K562 (cell line): ENCODE measurements at regions of chr16 and their contacts with region 1.

Region 1: DNA sequence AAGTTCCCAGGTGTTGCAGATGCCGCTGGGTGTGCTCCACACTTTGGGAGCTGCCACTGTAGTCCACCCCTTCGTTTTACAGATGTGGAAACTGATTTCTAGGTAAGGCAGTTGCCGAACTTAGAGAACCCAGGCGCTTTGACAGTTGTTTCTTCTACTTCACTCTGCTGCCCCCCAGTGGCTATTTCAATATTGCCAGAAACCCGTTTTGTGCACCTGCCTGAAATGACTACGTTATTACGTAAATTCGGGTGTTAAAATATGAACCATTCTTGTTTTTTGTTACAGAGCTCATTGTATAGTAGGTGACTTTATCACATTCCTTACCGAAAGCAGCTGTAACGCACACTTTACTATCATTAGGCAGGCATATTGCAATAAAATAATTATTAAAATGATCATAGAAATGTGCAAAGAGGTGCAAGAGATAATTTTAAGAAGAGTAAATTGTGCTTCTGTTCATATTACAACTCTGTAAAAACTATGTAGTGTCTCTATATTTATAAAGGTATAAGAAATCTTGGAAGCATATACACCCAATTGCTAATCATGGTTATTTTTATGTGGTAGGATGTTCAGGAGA is 44.9 kb downstream of the OTOA start:
- DNase-seq: peak; percentile 68 to 75 (median 72)
- ATAC-seq: peak; percentile 81
- H3K4me3 ChIP-seq: no peak overlapping the region
- H3K27ac ChIP-seq: no peak overlapping the region
- H3K4me1 ChIP-seq: no peaks in the 10 kb centered on the region; a peak in 1 of 5 replicates
- H3K27me3 ChIP-seq: peaks cover 3 to 17% of the 10 kb centered on the region in 2 experiments; a peak in 3 of 5 replicates
- CTCF ChIP-seq: peak; percentile 79 to 92 (median 82)
- EP300 ChIP-seq: no peak
- POLR2A ChIP-seq: no peak
- RAD21 ChIP-seq: peak; percentile 68 to 88

Region 2: DNA sequence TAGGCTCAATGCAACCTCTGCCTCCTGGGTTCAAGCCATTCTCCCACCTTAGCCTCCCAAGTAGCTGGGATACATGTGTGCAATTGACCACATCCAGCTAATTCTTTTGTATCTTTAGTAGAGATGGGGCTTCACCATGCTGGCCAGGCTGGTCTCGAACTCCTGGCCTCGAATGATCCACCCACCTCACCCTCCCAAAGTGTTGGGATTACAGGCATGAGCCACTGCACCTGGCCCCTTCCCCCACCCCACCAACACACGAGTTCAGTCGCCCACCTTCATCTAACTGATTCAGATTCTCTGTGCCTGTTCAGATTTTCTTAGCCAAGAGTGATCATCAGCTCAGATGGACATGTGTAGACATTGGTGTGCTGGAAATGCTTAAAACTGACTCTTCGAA is 134.2 kb before region 1 on chr16:
- CTCF ChIA-PET with region 1: no interaction called
- POLR2A ChIA-PET with region 1: no interaction called
- in situ Hi-C with region 1: no loop called
- intact Hi-C with region 1: no loop called
- DNase-seq: no peak
- ATAC-seq: no peak
- H3K4me3 ChIP-seq: no peak overlapping the region
- H3K27ac ChIP-seq: no peak overlapping the region
- H3K4me1 ChIP-seq: no peaks in the 10 kb centered on the region
- H3K27me3 ChIP-seq: peaks cover 10 to 25% of the 10 kb centered on the region in 2 experiments; a peak in 4 of 5 replicates
- CTCF ChIP-seq: no peak
- EP300 ChIP-seq: no peak
- POLR2A ChIP-seq: no peak
- RAD21 ChIP-seq: no peak

Region 3: DNA sequence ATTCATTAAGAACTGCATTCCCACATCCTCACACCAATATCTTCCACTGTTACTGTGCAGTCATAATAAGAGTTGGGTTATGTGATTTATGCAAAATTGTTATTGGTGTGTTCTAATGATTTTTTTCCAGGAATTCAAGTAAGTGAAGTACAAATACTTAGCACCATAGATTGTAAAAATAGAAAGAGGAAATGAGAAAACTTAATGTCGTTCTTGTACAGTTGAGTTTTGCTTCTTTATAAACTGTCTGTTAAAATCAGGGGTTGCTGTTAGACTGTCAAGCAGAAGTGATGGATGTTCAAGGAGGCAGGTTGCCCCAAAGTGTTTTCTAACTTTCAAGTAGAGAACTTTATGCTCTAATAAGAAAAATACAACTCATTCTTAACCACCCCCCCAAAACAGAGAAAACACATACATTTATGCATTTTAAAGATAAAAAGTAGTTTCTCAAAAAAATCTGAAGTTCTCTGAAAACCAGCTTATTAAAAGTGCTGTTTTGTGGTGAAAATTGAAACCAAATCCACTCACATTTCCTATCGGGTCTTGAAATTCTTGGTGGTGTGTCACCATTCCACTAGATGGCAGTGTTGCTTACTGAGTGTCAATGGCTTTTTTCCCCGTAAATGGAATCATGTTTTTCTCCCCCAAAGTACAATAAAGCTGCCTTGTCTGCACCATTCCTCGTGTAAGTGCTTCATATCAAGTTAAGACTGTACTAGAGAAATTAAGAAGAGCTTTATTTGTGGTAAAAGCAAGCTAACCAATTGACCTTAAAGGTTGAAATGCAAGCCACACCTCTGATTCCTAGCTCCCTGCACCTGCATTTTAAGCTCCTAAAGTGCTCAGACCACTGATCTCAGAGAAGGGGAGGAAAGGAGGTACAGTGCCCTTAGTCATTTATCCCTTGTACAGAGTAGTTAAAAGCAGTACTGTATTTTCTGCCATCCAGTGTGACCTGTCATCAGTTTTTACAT is 51.5 kb before region 1 on chr16:
- CTCF ChIA-PET with region 1: interaction called, 3 read pairs
- POLR2A ChIA-PET with region 1: no interaction called
- in situ Hi-C with region 1: loop called (anchors 5 kb)
- intact Hi-C with region 1: loop called (anchors 5 kb)
- DNase-seq: peak; percentile 64 to 72 (median 68)
- ATAC-seq: peak; percentile 67
- H3K4me3 ChIP-seq: no peak overlapping the region
- H3K27ac ChIP-seq: no peak overlapping the region
- H3K4me1 ChIP-seq: no peaks in the 10 kb centered on the region
- H3K27me3 ChIP-seq: no peaks in the 10 kb centered on the region
- CTCF ChIP-seq: peak; percentile 66 to 87 (median 82)
- EP300 ChIP-seq: no peak
- POLR2A ChIP-seq: no peak
- RAD21 ChIP-seq: peak; percentile 46 to 77; a peak in 3 of 4 replicates

Region 4: GRCh38 chr16:21694609-21695008 is 14.0 kb before region 1 on chr16:
- CTCF ChIA-PET with region 1: interaction called, 3 read pairs
- POLR2A ChIA-PET with region 1: interaction called, 11 read pairs
- in situ Hi-C with region 1: no loop called
- intact Hi-C with region 1: no loop called
- DNase-seq: no peak
- ATAC-seq: no peak
- H3K4me3 ChIP-seq: no peak overlapping the region
- H3K27ac ChIP-seq: no peak overlapping the region
- H3K4me1 ChIP-seq: no peaks in the 10 kb centered on the region
- H3K27me3 ChIP-seq: no peaks in the 10 kb centered on the region; a peak in 3 of 5 replicates
- CTCF ChIP-seq: no peak
- EP300 ChIP-seq: no peak
- POLR2A ChIP-seq: no peak
- RAD21 ChIP-seq: no peak

Region 5: DNA sequence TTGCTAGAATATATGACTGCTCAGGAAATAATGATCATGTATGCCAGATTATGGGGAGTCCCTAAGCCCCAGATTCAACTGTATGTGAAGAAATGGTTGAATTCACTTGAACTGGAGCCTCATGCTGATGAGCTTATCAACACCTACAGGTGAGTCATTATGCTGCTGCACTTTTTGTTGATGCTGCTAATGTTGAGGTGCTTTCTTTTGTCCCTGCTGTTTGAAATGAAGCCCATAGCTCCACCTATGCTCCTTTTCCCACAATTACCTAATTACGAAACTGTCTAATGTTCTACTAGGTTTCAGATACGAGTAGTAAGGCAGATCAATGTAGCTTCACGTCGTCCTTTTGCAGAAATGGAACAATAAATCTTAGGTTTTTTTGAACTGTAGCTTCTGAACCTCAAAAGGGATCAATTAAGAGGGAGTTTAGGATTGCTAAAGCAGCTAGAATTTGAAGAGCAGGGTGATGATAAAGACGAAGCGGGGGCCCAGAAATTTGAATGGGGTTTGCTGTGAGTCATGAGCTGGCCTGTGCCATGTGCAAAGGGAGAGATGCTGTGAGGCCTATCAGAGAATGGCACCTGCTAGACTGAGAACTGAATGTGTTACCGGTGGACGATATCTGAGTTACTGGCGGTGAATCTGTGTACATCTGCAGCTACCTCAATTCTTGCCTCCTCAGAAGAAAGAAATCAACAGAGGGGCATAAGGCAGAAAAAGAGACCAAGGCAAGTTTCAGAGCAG is 238.4 kb after region 1 on chr16:
- CTCF ChIA-PET with region 1: no interaction called
- POLR2A ChIA-PET with region 1: no interaction called
- in situ Hi-C with region 1: loop called (anchors 25 kb)
- intact Hi-C with region 1: no loop called
- DNase-seq: peak in 2 of 4 experiments; percentile 8 to 13
- ATAC-seq: no peak
- H3K4me3 ChIP-seq: no peak overlapping the region
- H3K27ac ChIP-seq: no peak overlapping the region
- H3K4me1 ChIP-seq: peaks cover 0 to 4% of the 10 kb centered on the region in 2 experiments; a peak in 2 of 5 replicates
- H3K27me3 ChIP-seq: peaks cover 8 to 20% of the 10 kb centered on the region in 2 experiments
- CTCF ChIP-seq: no peak
- EP300 ChIP-seq: no peak
- POLR2A ChIP-seq: no peak
- RAD21 ChIP-seq: no peak